ENCODE measurements at regions of chr11 and their contacts with region 1.

Region 1: GRCh38 chr11:14358729-14359439 is at the start of gene RRAS2:
- DNase-seq: peak; percentile 71
- ATAC-seq: peak; percentile 84
- H3K4me3 ChIP-seq: peak within 1 kb of the TSS; percentile 98
- H3K27ac ChIP-seq: peak within 1 kb of the TSS; percentile 48
- H3K4me1 ChIP-seq: peaks cover 23% of the 10 kb centered on the region
- H3K27me3 ChIP-seq: no peaks in the 10 kb centered on the region
- CTCF ChIP-seq: no peak
- total RNA-seq, gene RRAS2: 58.6 and 59.7 TPM in 2 replicates

Region 2: GRCh38 chr11:14308114-14308896 is 50.6 kb before region 1 on chr11:
- CTCF ChIA-PET with region 1: interaction called, 3 read pairs
- POLR2A ChIA-PET with region 1: interaction called, 3 read pairs
- intact Hi-C with region 1: loop called (anchors 2 kb)
- DNase-seq: peak; percentile 62
- ATAC-seq: peak; percentile 49
- H3K4me3 ChIP-seq: peak overlapping the region; percentile 22; the same call in 1 of the 2 replicates
- H3K27ac ChIP-seq: peak overlapping the region; percentile 14
- H3K4me1 ChIP-seq: peaks cover 36% of the 10 kb centered on the region
- H3K27me3 ChIP-seq: no peaks in the 10 kb centered on the region
- CTCF ChIP-seq: peak; percentile 69

Region 3: DNA sequence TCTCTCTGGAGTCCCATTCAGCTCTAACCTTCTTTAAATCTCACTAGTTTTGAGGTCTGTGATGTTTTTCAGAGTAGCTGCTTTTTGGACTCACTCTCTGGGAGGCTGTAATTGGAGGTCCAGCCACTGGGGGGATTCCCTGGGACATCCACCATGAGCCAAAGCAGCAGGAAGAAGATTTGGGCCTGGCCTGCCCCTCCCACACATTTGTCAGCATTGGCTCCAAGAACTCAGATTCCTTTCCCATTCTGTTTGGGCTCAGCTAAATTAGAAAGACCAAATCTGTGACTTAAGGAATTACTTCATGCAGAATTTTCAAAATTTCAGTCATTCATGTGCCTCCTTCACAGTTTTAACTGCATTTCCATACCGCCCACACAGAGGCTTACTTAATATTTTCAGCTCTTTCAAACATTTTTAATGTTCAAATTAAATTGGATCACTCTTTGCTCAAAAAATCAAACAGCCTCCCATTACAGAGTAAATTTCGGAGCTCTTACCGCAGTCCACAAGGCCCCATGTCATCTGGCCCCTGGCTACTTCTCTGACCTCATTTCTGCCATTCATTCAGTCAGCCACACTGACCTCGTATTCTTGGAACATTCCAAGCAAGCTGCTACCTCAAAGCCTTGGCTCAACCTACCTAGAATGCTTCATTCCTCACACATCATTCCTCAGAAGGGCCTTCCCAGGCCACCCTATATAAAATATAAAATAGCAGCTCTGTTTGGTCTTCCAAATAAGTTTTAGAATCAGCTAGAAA is 54.6 kb after region 1 on chr11:
- CTCF ChIA-PET with region 1: interaction called, 4 read pairs
- POLR2A ChIA-PET with region 1: no interaction called
- intact Hi-C with region 1: loop called (anchors 2 kb)
- DNase-seq: peak; percentile 27
- ATAC-seq: no peak
- H3K4me3 ChIP-seq: no peak overlapping the region
- H3K27ac ChIP-seq: no peak overlapping the region
- H3K4me1 ChIP-seq: peaks cover 53% of the 10 kb centered on the region
- H3K27me3 ChIP-seq: no peaks in the 10 kb centered on the region
- CTCF ChIP-seq: peak; percentile 30; the same call in 1 of the 2 replicates